Left ventricle myocardium inferior (tissue), 1 donor: ENCODE measurements at regions of chr15 and their contacts with region 1.

Region 1: DNA sequence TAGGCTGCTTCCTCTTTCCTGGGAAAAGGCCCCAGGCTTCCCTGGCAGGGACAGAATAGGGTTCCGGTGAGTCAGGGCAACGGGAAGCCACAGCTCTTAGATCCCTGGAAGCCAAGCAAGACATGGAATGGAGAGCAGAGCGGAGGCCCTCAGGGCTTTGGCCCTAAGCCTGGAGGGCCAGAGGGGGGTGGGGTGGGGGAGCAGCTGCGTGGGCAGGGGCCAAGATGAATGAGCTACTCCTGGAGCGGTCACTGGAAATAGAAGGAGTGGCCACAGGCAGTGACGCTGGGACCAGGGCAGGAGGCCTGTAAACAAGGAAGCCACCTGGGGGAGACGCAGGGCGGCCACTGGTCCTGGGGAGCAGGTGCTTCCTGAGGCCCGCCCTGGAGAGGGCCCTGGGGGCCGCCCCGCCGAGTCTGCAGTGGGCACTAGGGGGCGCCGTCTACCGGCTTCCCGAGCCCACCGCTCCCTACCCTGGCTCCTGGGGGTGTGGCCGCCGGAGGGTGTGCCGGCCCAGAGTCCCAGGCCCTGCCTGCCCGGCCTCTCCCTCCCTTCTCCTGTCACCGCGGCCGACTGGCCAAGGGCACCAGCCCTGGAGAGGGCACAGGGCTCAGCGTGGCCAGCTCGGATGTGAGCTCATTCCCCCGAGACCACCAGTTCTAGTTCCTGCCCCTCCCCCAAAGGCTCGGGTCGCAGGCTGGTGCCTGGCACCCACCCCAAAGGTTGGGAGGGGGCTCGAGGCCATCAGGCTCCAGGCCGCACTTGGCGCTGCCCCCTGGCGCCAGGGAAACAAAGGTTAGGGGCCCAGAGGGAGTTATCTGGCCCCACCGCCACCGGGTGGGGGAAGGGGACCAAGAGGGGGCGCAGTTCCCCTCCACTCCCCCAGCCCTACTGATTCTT is 12.1 kb downstream of the VPS18 start:
- DNase-seq: peak; percentile 87
- H3K4me3 ChIP-seq: peak overlapping the region; percentile 67
- H3K27ac ChIP-seq: peak overlapping the region; percentile 98
- H3K4me1 ChIP-seq: peaks cover 75% of the 10 kb centered on the region
- H3K27me3 ChIP-seq: no peaks in the 10 kb centered on the region
- CTCF ChIP-seq: peak; percentile 90

Region 2: GRCh38 chr15:40814901-40815670 is 91.3 kb before region 1 on chr15:
- intact Hi-C with region 1: no loop called
- DNase-seq: no peak
- H3K4me3 ChIP-seq: no peak overlapping the region
- H3K27ac ChIP-seq: no peak overlapping the region
- H3K4me1 ChIP-seq: peaks cover 10% of the 10 kb centered on the region
- H3K27me3 ChIP-seq: no peaks in the 10 kb centered on the region
- CTCF ChIP-seq: no peak

Region 3: DNA sequence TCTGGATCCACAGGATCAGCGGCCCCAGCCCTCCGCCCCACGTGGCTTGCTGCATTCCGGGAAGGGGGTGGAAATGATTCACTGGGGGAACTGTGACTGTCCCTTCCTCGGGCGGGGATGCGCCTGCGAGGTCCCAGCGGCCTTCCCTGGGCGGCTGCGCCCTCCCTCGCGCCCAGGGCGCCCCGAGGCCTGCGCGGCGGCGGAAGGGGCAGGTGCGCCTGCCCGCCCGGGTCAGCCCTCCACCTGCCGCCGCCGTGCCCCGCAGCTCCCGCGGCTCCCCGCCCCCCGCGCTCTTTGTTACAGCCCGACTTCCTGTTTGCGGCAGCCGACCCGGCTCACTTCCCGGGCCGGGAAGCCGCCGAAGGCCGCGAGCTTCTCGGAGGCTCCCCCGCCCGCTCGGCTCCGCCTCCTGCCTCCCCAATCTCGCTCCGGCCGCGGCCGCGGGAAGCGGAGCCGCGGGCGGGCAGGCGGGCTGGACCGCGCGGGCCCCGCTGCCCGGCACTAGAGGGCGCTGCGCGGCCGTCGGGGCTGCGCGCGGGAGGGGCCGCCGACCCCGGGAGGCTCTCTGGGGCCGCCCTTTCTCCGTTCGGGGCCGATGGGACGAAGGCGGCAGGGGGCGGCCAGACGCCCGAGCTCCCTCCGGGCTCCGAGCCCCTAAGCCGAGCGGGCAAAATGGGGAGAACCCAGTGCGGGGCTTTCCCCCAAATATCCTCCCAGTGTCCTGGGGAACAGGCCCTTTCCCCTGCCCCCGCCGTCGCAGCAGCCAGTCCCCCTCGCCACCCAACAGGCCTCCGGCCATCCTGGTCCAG is 35.4 kb after region 1 on chr15:
- intact Hi-C with region 1: loop called (anchors 5 kb)
- DNase-seq: peak; percentile 81
- H3K4me3 ChIP-seq: peak overlapping the region; percentile 77
- H3K27ac ChIP-seq: peak overlapping the region; percentile 92
- H3K4me1 ChIP-seq: peaks cover 61% of the 10 kb centered on the region
- H3K27me3 ChIP-seq: no peaks in the 10 kb centered on the region
- CTCF ChIP-seq: peak; percentile 79

Region 4: DNA sequence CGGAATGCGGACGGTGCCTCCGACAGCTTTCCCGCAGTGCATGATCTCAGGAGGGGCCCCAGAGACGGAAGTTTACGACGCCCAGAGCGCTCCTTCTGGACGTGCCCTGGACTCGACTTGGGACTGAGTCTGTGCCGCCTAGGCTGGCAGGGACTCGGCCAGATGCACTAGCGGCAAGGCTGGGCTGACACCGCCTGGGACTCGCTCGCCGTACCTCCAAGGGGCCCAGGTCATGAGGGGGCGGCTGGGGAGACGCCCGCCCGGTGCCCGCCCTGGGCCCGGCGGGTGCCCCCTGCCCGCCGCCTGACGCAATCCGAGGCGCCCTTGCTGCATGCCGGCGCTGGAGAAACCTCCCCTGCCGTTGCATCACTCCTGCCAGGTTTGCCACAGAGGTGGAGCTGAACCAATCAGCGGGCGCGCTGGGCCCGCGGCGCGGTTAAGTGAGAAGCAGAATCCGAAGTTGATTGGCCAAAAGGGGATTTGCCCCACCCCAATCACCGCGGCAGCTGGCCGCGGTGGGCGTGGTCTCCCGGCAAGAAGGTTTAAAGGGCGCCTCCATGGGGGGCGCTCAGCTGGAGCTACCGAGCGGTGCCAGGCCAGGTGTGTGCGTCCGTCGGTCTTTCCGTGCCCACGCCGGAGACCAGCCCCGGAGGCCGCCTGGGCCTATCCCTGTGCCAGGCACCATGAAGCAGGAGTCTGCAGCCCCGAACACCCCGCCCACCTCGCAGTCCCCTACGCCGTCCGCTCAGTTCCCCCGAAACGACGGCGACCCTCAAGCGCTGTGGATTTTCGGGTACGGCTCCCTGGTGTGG is 46.8 kb after region 1 on chr15 and contains the start of gene CHAC1:
- intact Hi-C with region 1: no loop called
- DNase-seq: peak; percentile 93
- H3K4me3 ChIP-seq: peak within 1 kb of the TSS; percentile 71
- H3K27ac ChIP-seq: peak within 1 kb of the TSS; percentile 77
- H3K4me1 ChIP-seq: peaks cover 62% of the 10 kb centered on the region
- H3K27me3 ChIP-seq: no peaks in the 10 kb centered on the region
- CTCF ChIP-seq: no peak
- total RNA-seq, gene CHAC1: 1.3 TPM

Region 5: GRCh38 chr15:41018502-41018901 is 112.2 kb after region 1 on chr15:
- intact Hi-C with region 1: loop called (anchors 5 kb)
- DNase-seq: no peak
- H3K4me3 ChIP-seq: no peak overlapping the region
- H3K27ac ChIP-seq: peak overlapping the region; percentile 70
- H3K4me1 ChIP-seq: peaks cover 54% of the 10 kb centered on the region
- H3K27me3 ChIP-seq: no peaks in the 10 kb centered on the region
- CTCF ChIP-seq: peak; percentile 67